ENCODE measurements at regions of chr22 and their contacts with region 1.

Region 1: GRCh38 chr22:41508770-41509170 is 35.5 kb downstream of the POLR3H start:
- DNase-seq: no peak
- H3K4me3 ChIP-seq: no peak overlapping the region
- H3K27ac ChIP-seq: peak overlapping the region in 2 of 5 donors; percentile 17 to 28
- H3K4me1 ChIP-seq: peaks cover 24 to 31% of the 10 kb centered on the region in 2 donors
- H3K27me3 ChIP-seq: no peaks in the 10 kb centered on the region
- CTCF ChIP-seq: no peak
- POLR2A ChIP-seq: no peak

Region 2: GRCh38 chr22:41458161-41458728 is 50.5 kb before region 1 on chr22:
- intact Hi-C with region 1: loop called (anchors 5 to 10 kb)
- DNase-seq: no peak
- H3K4me3 ChIP-seq: no peak overlapping the region
- H3K27ac ChIP-seq: no peak overlapping the region
- H3K4me1 ChIP-seq: no peaks in the 10 kb centered on the region
- H3K27me3 ChIP-seq: no peaks in the 10 kb centered on the region
- CTCF ChIP-seq: no peak
- POLR2A ChIP-seq: no peak

Region 3: DNA sequence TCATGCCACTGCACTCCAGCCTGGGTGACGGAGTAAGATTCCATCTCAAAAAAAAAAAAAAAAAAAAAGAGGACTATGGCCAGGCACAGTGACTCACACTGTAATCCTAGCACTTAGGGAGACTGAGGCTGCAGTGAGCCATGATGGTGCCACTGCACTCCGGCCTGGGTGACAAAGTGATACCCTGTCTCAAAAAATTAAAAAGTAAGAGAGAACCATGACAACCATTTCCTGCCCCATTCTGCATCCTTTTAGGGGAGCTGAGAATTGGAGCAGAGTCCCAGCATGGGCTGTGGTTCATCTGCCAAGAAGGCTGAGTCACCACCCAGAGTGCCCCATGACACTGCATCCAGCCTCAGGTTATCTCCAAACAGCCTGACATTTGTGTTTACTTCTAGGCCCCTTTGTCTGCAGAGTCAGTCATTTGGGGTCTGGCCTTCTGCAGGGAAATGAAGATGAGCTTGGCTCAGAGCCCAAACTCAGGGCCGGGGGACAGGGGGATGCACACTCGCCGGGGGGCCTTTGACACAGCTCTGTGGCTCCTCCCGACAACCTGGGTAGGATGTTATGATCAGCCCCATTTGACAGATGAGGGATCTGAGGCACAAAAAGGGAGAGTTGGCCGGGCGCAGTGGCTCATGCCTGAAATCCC is 56.8 kb after region 1 on chr22:
- intact Hi-C with region 1: no loop called
- DNase-seq: peak; percentile 68 to 87 (median 83)
- H3K4me3 ChIP-seq: no peak overlapping the region
- H3K27ac ChIP-seq: peak overlapping the region; percentile 59 to 92 (median 79)
- H3K4me1 ChIP-seq: peaks cover 58 to 79% of the 10 kb centered on the region in 2 donors
- H3K27me3 ChIP-seq: no peaks in the 10 kb centered on the region
- CTCF ChIP-seq: no peak
- POLR2A ChIP-seq: no peak

Region 4: GRCh38 chr22:41589391-41590241 is 80.8 kb after region 1 on chr22 and contains the start of gene PMM1:
- intact Hi-C with region 1: no loop called
- DNase-seq: peak; percentile 100
- H3K4me3 ChIP-seq: peak within 1 kb of the TSS; percentile 62 to 96 (median 86)
- H3K27ac ChIP-seq: peak within 1 kb of the TSS; percentile 44 to 91 (median 81)
- H3K4me1 ChIP-seq: peaks cover 8 to 15% of the 10 kb centered on the region in 2 donors
- H3K27me3 ChIP-seq: no peaks in the 10 kb centered on the region
- CTCF ChIP-seq: no peak
- POLR2A ChIP-seq: peak; percentile 89 to 97
- total RNA-seq, gene PMM1: 39.4 to 105 (median 71.6) TPM

Region 5: DNA sequence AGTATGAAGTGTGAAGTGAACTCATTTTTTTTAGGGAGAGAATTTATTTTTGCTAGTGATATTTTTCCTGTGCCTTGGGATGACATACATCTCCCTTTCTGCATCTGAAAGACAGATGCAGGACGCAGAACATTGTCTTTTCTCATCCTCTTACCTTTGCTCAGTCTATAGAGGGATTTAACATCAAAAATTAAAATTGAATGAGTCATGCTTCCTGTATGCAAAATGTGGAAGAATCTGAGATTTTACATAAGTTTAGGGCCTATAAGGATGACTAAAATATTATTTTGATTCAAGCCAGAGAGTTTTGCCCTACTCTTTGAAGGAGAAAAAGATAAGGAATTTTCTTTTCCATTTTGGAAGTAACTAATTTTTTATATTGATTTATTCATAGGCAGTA is 139.7 kb after region 1 on chr22:
- intact Hi-C with region 1: no loop called
- DNase-seq: no peak
- H3K4me3 ChIP-seq: no peak overlapping the region
- H3K27ac ChIP-seq: peak overlapping the region in 1 of 5 donors; percentile 7
- H3K4me1 ChIP-seq: peaks cover 0 to 7% of the 10 kb centered on the region in 2 donors
- H3K27me3 ChIP-seq: no peaks in the 10 kb centered on the region
- CTCF ChIP-seq: no peak
- POLR2A ChIP-seq: no peak